B cell (primary cell): ENCODE measurements at regions of chr11 and their contacts with region 1.

Region 1: GRCh38 chr11:62427630-62428233 is 8.9 kb downstream of the SCGB1A1 start:
- DNase-seq: no peak
- ATAC-seq: no peak
- H3K4me3 ChIP-seq: no peak overlapping the region
- H3K4me3 Mint-ChIP-seq: no peak overlapping the region
- H3K27ac ChIP-seq: no peak overlapping the region
- H3K27ac Mint-ChIP-seq: peak overlapping the region; percentile 12
- H3K4me1 ChIP-seq: peaks cover 4 to 13% of the 10 kb centered on the region in 2 donors
- H3K4me1 Mint-ChIP-seq: peaks cover 16% of the 10 kb centered on the region
- H3K27me3 ChIP-seq: peaks cover 0 to 2% (median 0%) of the 10 kb centered on the region in 4 experiments
- H3K27me3 Mint-ChIP-seq: peaks cover 10% of the 10 kb centered on the region
- CTCF ChIP-seq: no peak

Region 2: GRCh38 chr11:61985885-61986345 is 441.8 kb before region 1 on chr11:
- CTCF ChIA-PET with region 1: no interaction called
- POLR2A ChIA-PET with region 1: no interaction called
- intact Hi-C with region 1: no loop called
- DNase-seq: no peak
- ATAC-seq: no peak
- H3K4me3 ChIP-seq: no peak overlapping the region
- H3K4me3 Mint-ChIP-seq: no peak overlapping the region
- H3K27ac ChIP-seq: no peak overlapping the region
- H3K27ac Mint-ChIP-seq: no peak overlapping the region
- H3K4me1 ChIP-seq: peaks cover 4 to 6% of the 10 kb centered on the region in 2 donors
- H3K4me1 Mint-ChIP-seq: peaks cover 17% of the 10 kb centered on the region
- H3K27me3 ChIP-seq: peaks cover 0 to 3% (median 0%) of the 10 kb centered on the region in 4 experiments
- H3K27me3 Mint-ChIP-seq: peaks cover 9% of the 10 kb centered on the region
- CTCF ChIP-seq: no peak

Region 3: GRCh38 chr11:62322524-62322923 is 105.2 kb before region 1 on chr11:
- CTCF ChIA-PET with region 1: no interaction called
- POLR2A ChIA-PET with region 1: no interaction called
- intact Hi-C with region 1: no loop called
- DNase-seq: no peak
- ATAC-seq: no peak
- H3K4me3 ChIP-seq: no peak overlapping the region
- H3K4me3 Mint-ChIP-seq: no peak overlapping the region
- H3K27ac ChIP-seq: no peak overlapping the region
- H3K27ac Mint-ChIP-seq: no peak overlapping the region
- H3K4me1 ChIP-seq: no peaks in the 10 kb centered on the region
- H3K4me1 Mint-ChIP-seq: no peaks in the 10 kb centered on the region
- H3K27me3 ChIP-seq: peaks cover 0 to 13% (median 2%) of the 10 kb centered on the region in 4 experiments
- H3K27me3 Mint-ChIP-seq: peaks cover 21% of the 10 kb centered on the region
- CTCF ChIP-seq: no peak

Region 4: DNA sequence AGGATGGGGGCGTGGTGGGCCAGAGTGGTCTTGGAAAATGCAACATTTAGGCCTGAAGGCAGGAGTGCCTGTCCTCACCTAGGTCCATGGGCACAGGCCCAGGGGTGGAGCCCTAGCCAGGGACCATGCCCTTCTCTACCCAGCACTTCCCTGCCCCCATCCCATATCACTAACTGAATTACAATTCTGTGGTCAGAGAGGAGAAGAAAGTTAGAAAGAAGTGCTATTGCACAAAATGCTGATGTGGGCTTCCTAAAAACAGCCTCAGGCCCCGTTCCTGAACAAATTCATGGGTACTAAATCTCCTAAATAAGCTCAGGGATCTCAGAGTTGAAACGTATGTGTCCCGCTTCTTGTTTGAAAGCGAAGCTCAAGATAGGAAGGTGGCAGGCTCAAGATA is 94.0 kb before region 1 on chr11:
- CTCF ChIA-PET with region 1: no interaction called
- POLR2A ChIA-PET with region 1: no interaction called
- intact Hi-C with region 1: no loop called
- DNase-seq: no peak
- ATAC-seq: no peak
- H3K4me3 ChIP-seq: no peak overlapping the region
- H3K4me3 Mint-ChIP-seq: no peak overlapping the region
- H3K27ac ChIP-seq: no peak overlapping the region
- H3K27ac Mint-ChIP-seq: no peak overlapping the region
- H3K4me1 ChIP-seq: peaks cover 8% of the 10 kb centered on the region in 2 donors
- H3K4me1 Mint-ChIP-seq: peaks cover 12% of the 10 kb centered on the region
- H3K27me3 ChIP-seq: peaks cover 0 to 25% (median 4%) of the 10 kb centered on the region in 4 experiments
- H3K27me3 Mint-ChIP-seq: peaks cover 38% of the 10 kb centered on the region
- CTCF ChIP-seq: no peak

Region 5: GRCh38 chr11:62449451-62449851 is 21.7 kb after region 1 on chr11:
- CTCF ChIA-PET with region 1: interaction called, 44 read pairs
- POLR2A ChIA-PET with region 1: no interaction called
- intact Hi-C with region 1: loop called (anchors 2 kb)
- DNase-seq: no peak
- ATAC-seq: no peak
- H3K4me3 ChIP-seq: no peak overlapping the region
- H3K4me3 Mint-ChIP-seq: no peak overlapping the region
- H3K27ac ChIP-seq: no peak overlapping the region
- H3K27ac Mint-ChIP-seq: no peak overlapping the region
- H3K4me1 ChIP-seq: peaks cover 11 to 12% of the 10 kb centered on the region in 2 donors
- H3K4me1 Mint-ChIP-seq: peaks cover 14% of the 10 kb centered on the region
- H3K27me3 ChIP-seq: peaks cover 0 to 8% (median 0%) of the 10 kb centered on the region in 4 experiments
- H3K27me3 Mint-ChIP-seq: peaks cover 5% of the 10 kb centered on the region
- CTCF ChIP-seq: no peak

Region 6: GRCh38 chr11:62497132-62497915 is 69.6 kb after region 1 on chr11:
- CTCF ChIA-PET with region 1: interaction called, 13 read pairs
- POLR2A ChIA-PET with region 1: no interaction called
- intact Hi-C with region 1: no loop called
- DNase-seq: peak; percentile 38
- ATAC-seq: peak; percentile 54
- H3K4me3 ChIP-seq: no peak overlapping the region
- H3K4me3 Mint-ChIP-seq: no peak overlapping the region
- H3K27ac ChIP-seq: no peak overlapping the region
- H3K27ac Mint-ChIP-seq: no peak overlapping the region
- H3K4me1 ChIP-seq: no peaks in the 10 kb centered on the region
- H3K4me1 Mint-ChIP-seq: no peaks in the 10 kb centered on the region
- H3K27me3 ChIP-seq: peaks cover 0 to 6% (median 2%) of the 10 kb centered on the region in 4 experiments
- H3K27me3 Mint-ChIP-seq: peaks cover 17% of the 10 kb centered on the region
- CTCF ChIP-seq: peak; percentile 21

Region 7: GRCh38 chr11:62542750-62543567 is 115.2 kb after region 1 on chr11:
- CTCF ChIA-PET with region 1: interaction called, 207 read pairs
- POLR2A ChIA-PET with region 1: interaction called, 13 read pairs
- intact Hi-C with region 1: loop called (anchors 1 kb)
- DNase-seq: peak; percentile 84
- ATAC-seq: peak; percentile 44
- H3K4me3 ChIP-seq: peak overlapping the region in 4 of 5 experiments; percentile 38 to 99 (median 94)
- H3K4me3 Mint-ChIP-seq: peak overlapping the region; percentile 97
- H3K27ac ChIP-seq: peak overlapping the region; percentile 91 to 94
- H3K27ac Mint-ChIP-seq: peak overlapping the region; percentile 97
- H3K4me1 ChIP-seq: peaks cover 70 to 87% of the 10 kb centered on the region in 2 donors
- H3K4me1 Mint-ChIP-seq: peaks cover 84% of the 10 kb centered on the region
- H3K27me3 ChIP-seq: no peaks in the 10 kb centered on the region
- H3K27me3 Mint-ChIP-seq: no peaks in the 10 kb centered on the region
- CTCF ChIP-seq: peak; percentile 98

Region 8: GRCh38 chr11:62694455-62695167 is 266.9 kb after region 1 on chr11:
- CTCF ChIA-PET with region 1: interaction called, 41 read pairs
- POLR2A ChIA-PET with region 1: no interaction called
- intact Hi-C with region 1: loop called (anchors 1 kb)
- DNase-seq: peak; percentile 85
- ATAC-seq: peak; percentile 71
- H3K4me3 ChIP-seq: no peak overlapping the region
- H3K4me3 Mint-ChIP-seq: no peak overlapping the region
- H3K27ac ChIP-seq: no peak overlapping the region
- H3K27ac Mint-ChIP-seq: no peak overlapping the region
- H3K4me1 ChIP-seq: peaks cover 0 to 6% of the 10 kb centered on the region in 2 donors
- H3K4me1 Mint-ChIP-seq: peaks cover 5% of the 10 kb centered on the region
- H3K27me3 ChIP-seq: no peaks in the 10 kb centered on the region
- H3K27me3 Mint-ChIP-seq: no peaks in the 10 kb centered on the region
- CTCF ChIP-seq: peak; percentile 87